MCF 10A (cell line): ENCODE measurements at regions of chr1 and their contacts with region 1.

Region 1: GRCh38 chr1:244302889-244303613 is 148.7 kb downstream of the ADSS2 start:
- DNase-seq: peak; percentile 77
- H3K4me3 Mint-ChIP-seq: no peak overlapping the region
- H3K27ac Mint-ChIP-seq: peak overlapping the region; percentile 11
- H3K4me1 Mint-ChIP-seq: peaks cover 40% of the 10 kb centered on the region
- H3K27me3 Mint-ChIP-seq: no peaks in the 10 kb centered on the region
- CTCF ChIP-seq: no peak

Region 2: DNA sequence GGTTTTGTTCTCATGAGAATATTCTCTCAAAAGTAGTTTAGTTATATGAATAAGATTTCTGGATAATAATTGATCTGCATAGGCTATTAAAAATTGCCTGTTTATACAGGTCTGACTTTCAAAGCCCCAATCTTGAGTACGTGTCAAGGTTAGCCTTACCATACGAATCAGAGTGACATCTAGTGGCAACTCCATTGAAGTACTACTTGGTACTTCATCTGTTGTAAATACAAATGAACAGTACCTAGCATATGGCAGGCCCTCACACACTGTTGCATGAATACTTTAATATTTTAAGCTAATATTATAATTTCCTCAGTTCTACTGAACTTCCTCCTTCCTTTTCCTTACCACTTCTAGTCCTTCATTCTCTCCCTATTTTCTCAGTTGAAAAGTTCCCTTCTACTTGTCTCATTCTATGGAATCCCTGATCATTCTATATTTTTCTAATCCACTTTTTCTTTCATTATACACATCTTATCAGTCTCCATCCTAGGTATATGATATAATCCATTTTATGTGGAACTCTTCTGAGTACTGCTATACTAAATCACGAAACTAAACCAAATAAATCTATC is 554.3 kb before region 1 on chr1:
- CTCF ChIA-PET with region 1: no interaction called
- POLR2A ChIA-PET with region 1: interaction called, 3 read pairs
- intact Hi-C with region 1: loop called (anchors 1 kb)
- DNase-seq: peak; percentile 87
- H3K4me3 Mint-ChIP-seq: no peak overlapping the region
- H3K27ac Mint-ChIP-seq: no peak overlapping the region
- H3K4me1 Mint-ChIP-seq: no peaks in the 10 kb centered on the region
- H3K27me3 Mint-ChIP-seq: no peaks in the 10 kb centered on the region
- CTCF ChIP-seq: peak; percentile 88

Region 3: DNA sequence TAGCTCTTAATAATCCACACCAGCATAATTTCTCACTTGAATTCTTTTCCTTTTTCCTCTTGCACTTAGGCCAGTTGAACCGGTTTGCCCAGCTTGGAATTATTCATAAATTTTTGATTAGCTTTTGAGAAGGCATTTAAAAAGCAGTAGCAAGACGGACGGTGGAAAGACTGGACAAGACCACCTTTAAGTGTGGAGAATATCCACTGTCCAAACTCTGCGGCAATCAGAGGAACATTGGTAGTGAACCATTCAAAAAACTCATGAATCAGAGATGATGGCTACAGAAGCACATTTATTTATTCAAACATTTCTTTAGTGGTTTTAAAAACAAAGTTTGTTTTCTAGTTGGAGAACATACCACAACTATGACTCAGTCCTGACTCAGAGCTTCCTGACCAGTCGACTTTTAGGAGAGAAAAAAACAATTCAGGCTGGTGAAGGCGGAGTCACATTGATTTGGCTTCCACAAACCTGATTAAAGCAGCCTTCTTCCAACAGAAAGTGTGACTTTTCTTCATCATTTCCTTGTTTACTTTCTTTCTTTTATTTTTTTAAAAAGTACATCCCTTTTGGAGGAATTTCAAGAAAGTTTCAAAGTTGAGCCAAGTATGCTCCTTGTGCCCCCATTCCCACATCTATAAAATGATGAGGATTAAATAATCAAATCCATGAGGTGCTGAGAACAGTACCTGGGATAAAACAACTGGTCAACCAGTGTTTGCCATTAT is 19.9 kb after region 1 on chr1:
- CTCF ChIA-PET with region 1: interaction called, 21 read pairs
- POLR2A ChIA-PET with region 1: interaction called, 34 read pairs
- intact Hi-C with region 1: no loop called
- DNase-seq: peak; percentile 99
- H3K4me3 Mint-ChIP-seq: peak overlapping the region; percentile 51
- H3K27ac Mint-ChIP-seq: peak overlapping the region; percentile 97
- H3K4me1 Mint-ChIP-seq: peaks cover 50% of the 10 kb centered on the region
- H3K27me3 Mint-ChIP-seq: no peaks in the 10 kb centered on the region
- CTCF ChIP-seq: no peak

Region 4: GRCh38 chr1:244371242-244372141 is 68.4 kb after region 1 on chr1:
- CTCF ChIA-PET with region 1: interaction called, 5 read pairs
- POLR2A ChIA-PET with region 1: interaction called, 11 read pairs
- intact Hi-C with region 1: loop called (anchors 5 kb)
- DNase-seq: peak; percentile 77
- H3K4me3 Mint-ChIP-seq: no peak overlapping the region
- H3K27ac Mint-ChIP-seq: peak overlapping the region; percentile 9
- H3K4me1 Mint-ChIP-seq: peaks cover 29% of the 10 kb centered on the region
- H3K27me3 Mint-ChIP-seq: no peaks in the 10 kb centered on the region
- CTCF ChIP-seq: no peak